Activated CD4-positive, alpha-beta T cell treated with anti-CD3 and anti-CD28 coated beads, Interleukin-2, amount 10 ng/mL, durations not matched to agents 7 days and 5 days (primary cell): ENCODE measurements at regions of chr11 and their contacts with region 1.

Region 1: GRCh38 chr11:118907051-118908042 is 18.4 kb downstream of the BCL9L start:
- DNase-seq: peak; percentile 90
- H3K4me3 Mint-ChIP-seq: no peak overlapping the region
- H3K27ac Mint-ChIP-seq: peak overlapping the region; percentile 79
- H3K4me1 Mint-ChIP-seq: peaks cover 46% of the 10 kb centered on the region
- H3K27me3 Mint-ChIP-seq: no peaks in the 10 kb centered on the region

Region 2: DNA sequence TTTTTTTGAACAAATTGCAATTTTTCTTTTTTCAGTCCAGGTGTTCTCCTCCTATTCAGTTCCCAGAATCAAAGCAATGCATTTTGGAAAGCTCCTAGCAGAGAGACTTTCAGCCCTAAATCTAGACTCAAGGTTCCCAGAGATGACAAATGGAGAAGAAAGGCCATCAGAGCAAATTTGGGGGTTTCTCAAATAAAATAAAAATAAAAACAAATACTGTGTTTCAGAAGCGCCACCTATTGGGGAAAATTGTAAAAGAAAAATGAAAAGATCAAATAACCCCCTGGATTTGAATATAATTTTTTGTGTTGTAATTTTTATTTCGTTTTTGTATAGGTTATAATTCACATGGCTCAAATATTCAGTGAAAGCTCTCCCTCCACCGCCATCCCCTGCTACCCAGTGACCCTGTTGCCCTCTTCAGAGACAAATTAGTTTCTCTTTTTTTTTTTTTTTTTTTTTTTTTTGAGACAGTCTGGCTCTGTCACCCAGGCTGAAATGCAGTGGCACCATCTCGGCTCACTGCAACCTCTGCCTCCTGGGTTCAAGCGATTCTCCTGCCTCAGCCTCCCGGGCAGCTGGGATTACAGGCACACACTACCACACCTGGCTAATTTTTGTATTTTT is 554.1 kb before region 1 on chr11:
- CTCF ChIA-PET with region 1: no interaction called
- POLR2A ChIA-PET with region 1: no interaction called
- DNase-seq: peak; percentile 11
- H3K4me3 Mint-ChIP-seq: no peak overlapping the region
- H3K27ac Mint-ChIP-seq: peak overlapping the region; percentile 62
- H3K4me1 Mint-ChIP-seq: peaks cover 34% of the 10 kb centered on the region
- H3K27me3 Mint-ChIP-seq: no peaks in the 10 kb centered on the region

Region 3: DNA sequence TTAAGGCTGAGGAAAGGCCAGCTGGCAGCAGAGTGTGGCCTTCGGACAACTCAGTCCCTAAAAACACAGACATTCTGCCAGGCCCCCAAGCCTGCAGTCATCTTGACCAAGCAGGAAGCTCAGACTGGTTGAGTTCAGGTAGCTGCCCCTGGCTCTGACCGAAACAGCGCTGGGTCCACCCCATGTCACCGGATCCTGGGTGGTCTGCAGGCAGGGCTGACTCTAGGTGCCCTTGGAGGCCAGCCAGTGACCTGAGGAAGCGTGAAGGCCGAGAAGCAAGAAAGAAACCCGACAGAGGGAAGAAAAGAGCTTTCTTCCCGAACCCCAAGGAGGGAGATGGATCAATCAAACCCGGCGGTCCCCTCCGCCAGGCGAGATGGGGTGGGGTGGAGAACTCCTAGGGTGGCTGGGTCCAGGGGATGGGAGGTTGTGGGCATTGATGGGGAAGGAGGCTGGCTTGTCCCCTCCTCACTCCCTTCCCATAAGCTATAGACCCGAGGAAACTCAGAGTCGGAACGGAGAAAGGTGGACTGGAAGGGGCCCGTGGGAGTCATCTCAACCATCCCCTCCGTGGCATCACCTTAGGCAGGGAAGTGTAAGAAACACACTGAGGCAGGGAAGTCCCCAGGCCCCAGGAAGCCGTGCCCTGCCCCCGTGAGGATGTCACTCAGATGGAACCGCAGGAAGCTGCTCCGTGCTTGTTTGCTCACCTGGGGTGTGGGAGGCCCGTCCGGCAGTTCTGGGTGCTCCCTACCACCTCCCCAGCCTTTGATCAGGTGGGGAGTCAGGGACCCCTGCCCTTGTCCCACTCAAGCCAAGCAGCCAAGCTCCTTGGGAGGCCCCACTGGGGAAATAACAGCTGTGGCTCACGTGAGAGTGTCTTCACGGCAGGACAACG is 12.0 kb before region 1 on chr11:
- CTCF ChIA-PET with region 1: interaction called, 17 read pairs
- POLR2A ChIA-PET with region 1: no interaction called
- DNase-seq: peak; percentile 75
- H3K4me3 Mint-ChIP-seq: peak overlapping the region; percentile 64
- H3K27ac Mint-ChIP-seq: peak overlapping the region; percentile 88
- H3K4me1 Mint-ChIP-seq: peaks cover 76% of the 10 kb centered on the region
- H3K27me3 Mint-ChIP-seq: no peaks in the 10 kb centered on the region

Region 4: GRCh38 chr11:118956094-118956846 is 48.9 kb after region 1 on chr11 and contains the start of gene UPK2:
- CTCF ChIA-PET with region 1: interaction called, 23 read pairs
- POLR2A ChIA-PET with region 1: no interaction called
- DNase-seq: peak; percentile 91
- H3K4me3 Mint-ChIP-seq: no peak within 1 kb of the TSS
- H3K27ac Mint-ChIP-seq: peak within 1 kb of the TSS; percentile 61
- H3K4me1 Mint-ChIP-seq: peaks cover 4% of the 10 kb centered on the region
- H3K27me3 Mint-ChIP-seq: peaks cover 8% of the 10 kb centered on the region
- total RNA-seq, gene UPK2: 0.60 TPM in 1 of 2 experiments, not detected in the other